CD4-positive, alpha-beta T cell (primary cell): ENCODE measurements at regions of chr22 and their contacts with region 1.

Region 1: DNA sequence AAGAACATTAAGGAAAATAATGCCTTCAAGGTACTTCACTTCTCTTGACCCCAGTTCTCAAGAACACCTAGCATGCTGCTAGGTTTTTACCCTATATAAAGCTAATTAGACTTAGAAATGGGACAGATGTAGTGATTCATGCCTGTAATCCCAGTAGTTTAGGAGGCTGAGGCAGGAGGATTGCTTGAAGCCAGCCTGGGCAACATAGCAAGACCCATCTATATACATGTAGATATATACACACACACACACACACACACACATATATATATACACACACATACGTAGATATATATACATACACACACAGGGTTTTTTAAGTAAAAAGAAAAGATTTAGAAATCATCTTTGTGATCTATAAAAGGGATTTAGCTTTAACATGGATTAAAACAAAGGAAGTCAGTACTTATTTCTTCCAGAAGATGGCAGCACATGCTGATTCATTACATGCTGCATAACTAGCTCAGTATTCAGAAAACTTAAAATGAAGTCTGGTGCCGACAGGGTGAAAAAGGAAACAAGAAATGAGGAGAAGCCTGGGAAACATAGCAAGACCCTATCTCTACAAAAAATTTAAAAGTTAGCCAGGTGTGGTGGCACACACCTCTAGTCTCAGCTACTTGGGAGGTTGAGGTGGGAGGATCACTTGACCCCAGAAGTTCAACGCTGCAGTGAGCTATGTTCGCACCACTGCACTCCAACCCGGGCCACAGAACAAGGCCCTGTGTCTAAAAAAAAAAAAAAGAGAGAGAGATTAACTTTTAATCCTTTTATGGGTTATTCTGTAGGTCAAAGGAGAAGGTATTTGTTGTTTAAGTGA is 28.5 kb upstream of the RBX1 start:
- DNase-seq: peak in 6 of 14 experiments; percentile 1 to 84 (median 46)
- ATAC-seq: peak; percentile 98
- H3K4me3 ChIP-seq: no peak overlapping the region
- H3K4me3 Mint-ChIP-seq: peak overlapping the region; percentile 0
- H3K27ac ChIP-seq: no peak overlapping the region
- H3K27ac Mint-ChIP-seq: no peak overlapping the region
- H3K4me1 ChIP-seq: peaks cover 3% of the 10 kb centered on the region
- H3K4me1 Mint-ChIP-seq: peaks cover 5% of the 10 kb centered on the region
- H3K27me3 ChIP-seq: no peaks in the 10 kb centered on the region
- H3K27me3 Mint-ChIP-seq: no peaks in the 10 kb centered on the region
- CTCF ChIP-seq: peak; percentile 78

Region 2: DNA sequence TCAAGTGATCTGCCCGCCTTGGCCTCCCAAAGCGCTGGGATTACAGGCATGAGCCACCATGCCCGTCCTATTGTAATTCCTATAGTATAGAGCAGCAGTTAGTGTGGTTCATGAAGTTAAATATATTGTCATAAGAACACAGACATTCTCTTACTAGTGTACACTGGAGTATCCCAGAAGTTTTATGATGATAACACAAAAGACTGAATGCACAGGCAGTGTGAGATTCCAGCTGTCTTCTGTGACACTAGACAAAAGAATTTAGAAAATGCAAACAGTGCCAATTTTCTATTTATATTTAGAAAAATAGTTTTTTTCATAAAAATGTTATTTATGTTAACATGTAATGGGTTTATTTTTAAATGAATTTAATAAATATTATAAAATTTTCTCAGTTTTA is 10.9 kb before region 1 on chr22:
- CTCF ChIA-PET with region 1: interaction called, 10 read pairs
- POLR2A ChIA-PET with region 1: interaction called, 4 read pairs
- intact Hi-C with region 1: no loop called
- DNase-seq: no peak
- ATAC-seq: no peak
- H3K4me3 ChIP-seq: no peak overlapping the region
- H3K4me3 Mint-ChIP-seq: no peak overlapping the region
- H3K27ac ChIP-seq: no peak overlapping the region
- H3K27ac Mint-ChIP-seq: no peak overlapping the region
- H3K4me1 ChIP-seq: no peaks in the 10 kb centered on the region
- H3K4me1 Mint-ChIP-seq: no peaks in the 10 kb centered on the region
- H3K27me3 ChIP-seq: no peaks in the 10 kb centered on the region
- H3K27me3 Mint-ChIP-seq: no peaks in the 10 kb centered on the region
- CTCF ChIP-seq: no peak

Region 3: GRCh38 chr22:41036924-41037323 is 114.2 kb after region 1 on chr22:
- CTCF ChIA-PET with region 1: no interaction called
- POLR2A ChIA-PET with region 1: no interaction called
- intact Hi-C with region 1: no loop called
- DNase-seq: no peak
- ATAC-seq: no peak
- H3K4me3 ChIP-seq: no peak overlapping the region
- H3K4me3 Mint-ChIP-seq: no peak overlapping the region
- H3K27ac ChIP-seq: no peak overlapping the region
- H3K27ac Mint-ChIP-seq: no peak overlapping the region
- H3K4me1 ChIP-seq: no peaks in the 10 kb centered on the region
- H3K4me1 Mint-ChIP-seq: no peaks in the 10 kb centered on the region
- H3K27me3 ChIP-seq: no peaks in the 10 kb centered on the region
- H3K27me3 Mint-ChIP-seq: no peaks in the 10 kb centered on the region
- CTCF ChIP-seq: no peak

Region 4: GRCh38 chr22:41096841-41097240 is 174.1 kb after region 1 on chr22:
- CTCF ChIA-PET with region 1: interaction called, 6 read pairs
- POLR2A ChIA-PET with region 1: interaction called, 24 read pairs
- intact Hi-C with region 1: no loop called
- DNase-seq: no peak
- ATAC-seq: no peak
- H3K4me3 ChIP-seq: no peak overlapping the region
- H3K4me3 Mint-ChIP-seq: peak overlapping the region; percentile 77
- H3K27ac ChIP-seq: no peak overlapping the region
- H3K27ac Mint-ChIP-seq: peak overlapping the region; percentile 75
- H3K4me1 ChIP-seq: peaks cover 39% of the 10 kb centered on the region
- H3K4me1 Mint-ChIP-seq: peaks cover 69% of the 10 kb centered on the region
- H3K27me3 ChIP-seq: no peaks in the 10 kb centered on the region
- H3K27me3 Mint-ChIP-seq: no peaks in the 10 kb centered on the region
- CTCF ChIP-seq: no peak

Region 5: GRCh38 chr22:41237707-41238569 is 315.2 kb after region 1 on chr22:
- CTCF ChIA-PET with region 1: interaction called, 49 read pairs
- POLR2A ChIA-PET with region 1: interaction called, 39 read pairs
- intact Hi-C with region 1: loop called in 1 of 2 experiments (anchors 1 kb)
- DNase-seq: peak; percentile 74 to 92 (median 84)
- ATAC-seq: peak; percentile 96
- H3K4me3 ChIP-seq: peak overlapping the region; percentile 44
- H3K4me3 Mint-ChIP-seq: peak overlapping the region; percentile 73
- H3K27ac ChIP-seq: no peak overlapping the region
- H3K27ac Mint-ChIP-seq: no peak overlapping the region
- H3K4me1 ChIP-seq: peaks cover 16% of the 10 kb centered on the region
- H3K4me1 Mint-ChIP-seq: peaks cover 5% of the 10 kb centered on the region
- H3K27me3 ChIP-seq: no peaks in the 10 kb centered on the region
- H3K27me3 Mint-ChIP-seq: no peaks in the 10 kb centered on the region
- CTCF ChIP-seq: no peak

Region 6: DNA sequence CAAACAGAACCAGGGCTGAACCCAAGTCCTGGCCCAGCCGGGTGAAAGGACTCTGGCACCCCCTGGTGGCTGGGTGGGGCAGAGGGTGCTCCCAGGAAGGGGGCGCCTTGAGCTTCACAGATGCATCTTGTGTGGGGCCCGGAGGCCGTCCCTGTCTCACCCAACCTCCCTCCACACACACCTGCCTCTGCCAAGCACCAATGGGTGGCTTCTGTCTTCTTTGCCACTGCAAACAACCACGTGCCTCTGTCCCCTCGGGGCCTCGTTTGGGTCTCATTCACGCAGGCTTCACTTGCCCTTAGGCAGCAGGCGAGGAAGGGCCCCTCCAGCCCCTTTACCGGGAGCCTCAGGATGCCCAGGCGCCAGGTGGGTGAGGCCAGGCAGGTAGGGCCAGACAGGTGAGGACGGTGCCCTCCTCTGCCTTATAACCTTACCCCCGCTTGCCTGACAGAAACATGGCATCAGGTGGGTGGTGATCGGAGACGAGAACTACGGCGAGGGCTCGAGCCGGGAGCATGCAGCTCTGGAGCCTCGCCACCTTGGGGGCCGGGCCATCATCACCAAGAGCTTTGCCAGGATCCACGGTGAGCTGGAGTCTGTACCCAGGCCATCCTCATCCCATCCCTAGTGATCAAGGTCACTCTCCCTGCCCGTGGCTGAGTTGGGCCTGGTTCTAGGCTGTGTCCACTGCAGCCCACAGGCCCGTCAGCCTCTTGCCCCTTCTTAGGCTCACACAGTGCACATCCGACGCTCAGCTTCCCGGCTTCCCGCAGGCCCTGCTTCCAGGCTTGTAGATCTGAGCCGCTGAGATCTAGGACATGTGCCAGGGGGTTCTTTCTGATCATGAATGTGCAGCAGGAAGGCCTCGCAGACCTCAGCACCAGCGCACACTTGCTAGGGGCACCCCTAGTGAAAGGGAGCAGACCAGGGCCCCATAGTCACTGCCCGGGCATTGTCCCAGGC is 604.4 kb after region 1 on chr22:
- CTCF ChIA-PET with region 1: no interaction called
- POLR2A ChIA-PET with region 1: no interaction called
- intact Hi-C with region 1: loop called in 1 of 2 experiments (anchors 10 kb)
- DNase-seq: peak; percentile 57 to 82 (median 68)
- ATAC-seq: peak; percentile 65
- H3K4me3 ChIP-seq: no peak overlapping the region
- H3K4me3 Mint-ChIP-seq: no peak overlapping the region
- H3K27ac ChIP-seq: peak overlapping the region in 1 of 2 donors; percentile 60
- H3K27ac Mint-ChIP-seq: peak overlapping the region; percentile 47
- H3K4me1 ChIP-seq: peaks cover 28% of the 10 kb centered on the region
- H3K4me1 Mint-ChIP-seq: peaks cover 15% of the 10 kb centered on the region
- H3K27me3 ChIP-seq: no peaks in the 10 kb centered on the region
- H3K27me3 Mint-ChIP-seq: no peaks in the 10 kb centered on the region
- CTCF ChIP-seq: peak; percentile 80